ENCODE measurements at regions of chr6 and their contacts with region 1.

Region 1: GRCh38 chr6:4606821-4607704 is 169.1 kb upstream of the CDYL start:
- DNase-seq: peak; percentile 70 to 89
- H3K4me3 ChIP-seq: peak overlapping the region; percentile 57
- H3K27ac ChIP-seq: peak overlapping the region; percentile 86
- H3K4me1 ChIP-seq: peaks cover 33% of the 10 kb centered on the region
- H3K27me3 ChIP-seq: no peaks in the 10 kb centered on the region
- CTCF ChIP-seq: no peak

Region 2: GRCh38 chr6:4313044-4313686 is 293.9 kb before region 1 on chr6:
- CTCF ChIA-PET with region 1: no interaction called
- POLR2A ChIA-PET with region 1: no interaction called
- intact Hi-C with region 1: loop called (anchors 2 kb)
- DNase-seq: peak; percentile 79 to 83
- H3K4me3 ChIP-seq: no peak overlapping the region
- H3K27ac ChIP-seq: peak overlapping the region; percentile 91
- H3K4me1 ChIP-seq: peaks cover 28% of the 10 kb centered on the region
- H3K27me3 ChIP-seq: no peaks in the 10 kb centered on the region
- CTCF ChIP-seq: peak; percentile 67

Region 3: GRCh38 chr6:4358414-4359114 is 248.5 kb before region 1 on chr6:
- CTCF ChIA-PET with region 1: no interaction called
- POLR2A ChIA-PET with region 1: no interaction called
- intact Hi-C with region 1: loop called (anchors 1 kb)
- DNase-seq: peak; percentile 98
- H3K4me3 ChIP-seq: peak overlapping the region; percentile 49; the same call in 1 of the 2 replicates
- H3K27ac ChIP-seq: peak overlapping the region; percentile 100
- H3K4me1 ChIP-seq: peaks cover 55% of the 10 kb centered on the region
- H3K27me3 ChIP-seq: no peaks in the 10 kb centered on the region
- CTCF ChIP-seq: no peak

Region 4: DNA sequence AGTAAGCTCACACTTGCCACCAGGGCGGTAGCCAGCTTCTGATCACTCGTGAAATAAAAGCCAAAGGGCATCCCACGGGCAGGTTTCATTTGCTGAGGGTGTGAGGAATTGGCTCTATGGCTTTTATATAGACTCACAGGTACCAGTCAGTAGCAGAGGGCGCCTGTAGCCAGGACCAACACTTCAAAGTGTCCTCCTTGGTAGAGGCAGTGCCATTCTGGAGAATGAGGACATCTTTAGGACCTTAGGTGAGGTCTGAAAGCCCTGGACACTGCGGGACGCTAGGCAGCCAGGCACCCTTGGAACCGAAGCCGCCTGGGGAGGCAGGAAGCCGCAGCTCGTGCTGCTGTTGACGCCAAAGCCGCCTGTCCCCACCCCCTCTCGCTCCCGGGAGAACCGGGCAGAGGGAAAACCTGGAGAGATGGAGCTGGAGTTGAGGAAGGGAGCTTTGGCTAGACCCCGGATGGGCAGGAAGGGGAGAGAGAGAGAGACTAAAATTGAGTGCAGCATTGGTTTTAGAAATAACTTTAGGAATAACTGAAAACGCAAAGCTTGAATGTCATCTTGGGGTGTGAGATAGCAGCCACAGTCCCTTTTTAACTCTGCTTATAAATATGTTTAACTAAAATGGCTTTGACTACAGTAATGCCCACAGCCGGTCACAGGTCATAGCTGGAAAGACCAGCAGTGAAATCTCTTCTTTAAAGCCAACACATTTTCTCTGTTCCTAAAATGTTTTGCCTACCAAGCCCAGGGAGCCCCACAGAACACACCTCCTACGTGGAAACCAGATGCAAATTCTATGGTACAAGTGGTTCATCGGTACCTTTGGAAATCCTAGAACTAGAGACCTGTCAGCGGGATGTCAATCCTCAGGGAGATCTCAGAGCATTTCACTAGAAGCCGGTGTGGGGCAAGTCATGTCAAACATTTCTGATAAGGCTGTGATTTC is 40.6 kb after region 1 on chr6:
- CTCF ChIA-PET with region 1: no interaction called
- POLR2A ChIA-PET with region 1: no interaction called
- intact Hi-C with region 1: loop called (anchors 5 kb)
- DNase-seq: peak; percentile 40 to 69
- H3K4me3 ChIP-seq: peak overlapping the region; percentile 46
- H3K27ac ChIP-seq: no peak overlapping the region
- H3K4me1 ChIP-seq: peaks cover 14% of the 10 kb centered on the region; the same call in 1 of the 2 replicates
- H3K27me3 ChIP-seq: no peaks in the 10 kb centered on the region
- CTCF ChIP-seq: no peak

Region 5: GRCh38 chr6:4732691-4733315 is 125.7 kb after region 1 on chr6:
- CTCF ChIA-PET with region 1: no interaction called
- POLR2A ChIA-PET with region 1: interaction called, 3 read pairs
- intact Hi-C with region 1: loop called (anchors 1 kb)
- DNase-seq: peak; percentile 84
- H3K4me3 ChIP-seq: peak overlapping the region; percentile 12; the same call in 1 of the 2 replicates
- H3K27ac ChIP-seq: peak overlapping the region; percentile 91
- H3K4me1 ChIP-seq: peaks cover 38% of the 10 kb centered on the region
- H3K27me3 ChIP-seq: no peaks in the 10 kb centered on the region
- CTCF ChIP-seq: no peak

Region 6: DNA sequence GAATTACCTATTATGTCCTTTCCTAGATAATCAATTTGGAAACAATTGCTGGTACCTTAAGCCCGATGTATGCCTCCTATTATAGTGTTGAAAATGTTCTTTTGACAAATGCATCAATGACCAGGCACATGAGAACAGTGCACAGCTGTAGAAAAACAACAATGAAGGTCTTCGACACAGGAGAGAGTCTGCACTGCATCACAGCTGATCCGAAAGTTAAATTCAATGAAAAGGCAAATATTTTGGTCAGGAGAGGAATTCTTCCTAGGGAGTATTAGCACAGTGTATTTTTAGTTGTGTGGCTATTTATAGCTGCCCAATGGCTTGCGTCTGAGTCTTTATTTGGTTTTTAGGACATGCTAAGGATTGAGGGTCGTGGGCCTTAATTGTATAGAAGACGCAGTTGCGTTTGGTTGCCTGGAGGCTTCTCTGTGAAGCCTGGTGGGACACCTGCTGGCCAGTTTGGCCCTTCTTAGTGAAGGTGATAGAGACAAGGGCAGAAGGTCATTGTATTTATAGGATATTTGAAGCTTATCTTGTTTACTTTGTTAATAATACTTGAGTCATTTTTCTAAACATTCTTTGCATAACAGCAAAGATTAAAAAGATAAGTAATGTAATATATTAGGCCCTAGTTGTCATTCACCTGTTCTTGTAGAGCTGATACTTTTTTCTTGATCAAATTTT is 241.5 kb after region 1 on chr6:
- CTCF ChIA-PET with region 1: no interaction called
- POLR2A ChIA-PET with region 1: no interaction called
- intact Hi-C with region 1: loop called (anchors 1 kb)
- DNase-seq: peak; percentile 38 to 74
- H3K4me3 ChIP-seq: no peak overlapping the region
- H3K27ac ChIP-seq: no peak overlapping the region
- H3K4me1 ChIP-seq: peaks cover 14% of the 10 kb centered on the region
- H3K27me3 ChIP-seq: no peaks in the 10 kb centered on the region
- CTCF ChIP-seq: peak; percentile 64

Region 7: DNA sequence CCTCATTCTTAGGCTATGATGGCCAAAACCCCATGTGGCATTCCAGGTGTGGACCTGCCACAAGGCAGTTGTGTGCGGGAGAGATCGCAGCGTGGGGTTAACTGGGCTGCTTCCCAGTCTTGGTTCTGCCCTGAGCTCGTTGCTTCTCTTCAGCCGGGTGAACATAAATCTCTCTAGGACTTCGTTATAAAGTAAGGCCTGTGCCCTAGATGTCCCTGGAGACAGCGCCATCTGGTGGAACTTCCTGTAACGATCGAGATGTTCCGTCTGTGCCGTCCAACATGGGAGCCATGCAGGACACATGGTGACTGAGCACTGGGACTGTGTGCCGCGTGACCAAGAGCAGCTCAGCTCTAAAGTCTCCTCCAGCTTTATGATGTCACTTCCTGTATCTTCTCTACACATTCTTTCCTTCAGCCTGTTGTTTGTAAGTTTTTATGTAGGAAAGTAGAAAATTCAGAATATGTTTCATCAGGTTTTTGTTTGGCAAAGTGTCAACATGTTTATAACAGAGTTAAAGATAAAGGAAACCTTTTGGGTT is 423.6 kb after region 1 on chr6:
- CTCF ChIA-PET with region 1: no interaction called
- POLR2A ChIA-PET with region 1: no interaction called
- intact Hi-C with region 1: loop called (anchors 10 kb)
- DNase-seq: peak in 1 of 2 experiments; percentile 70
- H3K4me3 ChIP-seq: no peak overlapping the region
- H3K27ac ChIP-seq: no peak overlapping the region
- H3K4me1 ChIP-seq: peaks cover 11% of the 10 kb centered on the region; the same call in 1 of the 2 replicates
- H3K27me3 ChIP-seq: no peaks in the 10 kb centered on the region
- CTCF ChIP-seq: peak; percentile 40; the same call in 1 of the 2 replicates